Activated CD8-positive, alpha-beta memory T cell treated with anti-CD3 and anti-CD28 coated beads, Interleukin-2, amount 10 ng/mL, durations not matched to agents 7 days and 5 days (primary cell): ENCODE measurements at regions of chr1 and their contacts with region 1.

Region 1: GRCh38 chr1:44848456-44849181 is 5.6 kb upstream of the PTCH2 start:
- DNase-seq: no peak
- ATAC-seq: no peak
- H3K4me3 Mint-ChIP-seq: no peak overlapping the region
- H3K27ac Mint-ChIP-seq: no peak overlapping the region
- H3K4me1 Mint-ChIP-seq: no peaks in the 10 kb centered on the region
- H3K27me3 Mint-ChIP-seq: peaks cover 5% of the 10 kb centered on the region

Region 2: DNA sequence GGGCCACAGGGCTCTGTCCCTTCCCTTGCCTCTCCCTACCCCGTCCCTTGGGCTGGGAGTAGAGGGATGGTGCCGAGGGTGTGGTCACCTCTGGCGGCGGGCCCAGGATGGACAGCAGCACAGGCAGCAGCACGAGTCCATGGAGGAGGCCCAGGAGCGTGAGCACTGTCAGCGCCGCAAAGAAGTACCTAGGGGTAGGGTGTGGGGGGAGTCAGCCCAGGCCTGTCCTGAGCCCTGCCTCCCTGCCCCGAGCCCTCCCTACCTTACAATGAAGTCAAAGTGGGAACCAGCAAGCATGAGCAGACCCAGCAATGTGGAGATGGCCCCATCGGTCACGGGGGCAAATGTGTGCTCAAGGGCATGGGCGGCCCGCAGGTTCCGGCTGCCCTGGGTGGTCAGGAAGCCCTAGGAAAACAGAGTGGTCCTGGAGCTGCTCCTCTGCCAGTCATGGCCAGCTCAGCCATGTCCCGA is 25.6 kb before region 1 on chr1:
- CTCF ChIA-PET with region 1: no interaction called
- DNase-seq: no peak
- ATAC-seq: no peak
- H3K4me3 Mint-ChIP-seq: no peak overlapping the region
- H3K27ac Mint-ChIP-seq: no peak overlapping the region
- H3K4me1 Mint-ChIP-seq: peaks cover 32% of the 10 kb centered on the region
- H3K27me3 Mint-ChIP-seq: no peaks in the 10 kb centered on the region

Region 3: GRCh38 chr1:44835738-44836675 is 12.6 kb before region 1 on chr1:
- CTCF ChIA-PET with region 1: interaction called, 19 read pairs
- DNase-seq: peak; percentile 94
- ATAC-seq: peak; percentile 97
- H3K4me3 Mint-ChIP-seq: no peak overlapping the region
- H3K27ac Mint-ChIP-seq: peak overlapping the region; percentile 47
- H3K4me1 Mint-ChIP-seq: peaks cover 9% of the 10 kb centered on the region
- H3K27me3 Mint-ChIP-seq: no peaks in the 10 kb centered on the region

Region 4: DNA sequence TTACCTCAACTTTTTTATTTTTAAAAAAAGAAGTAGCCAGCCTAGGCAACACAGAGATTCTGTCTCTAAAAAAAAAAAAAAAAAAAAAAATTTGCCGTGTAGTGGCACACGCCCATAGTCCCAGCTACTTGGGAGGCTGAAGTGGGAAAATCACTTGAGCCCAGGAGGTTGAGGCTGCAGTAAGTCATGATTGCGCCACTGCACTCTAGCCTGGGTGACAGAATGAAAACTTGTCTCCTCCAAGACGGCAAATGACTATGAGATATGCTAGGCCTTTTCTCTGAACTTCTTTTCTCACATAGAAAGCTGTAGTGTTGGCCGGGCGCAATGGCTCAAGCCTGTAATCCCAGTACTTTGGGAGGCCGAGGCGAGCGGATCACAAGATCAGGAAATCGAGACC is 19.2 kb after region 1 on chr1:
- CTCF ChIA-PET with region 1: no interaction called
- DNase-seq: no peak
- ATAC-seq: no peak
- H3K4me3 Mint-ChIP-seq: no peak overlapping the region
- H3K27ac Mint-ChIP-seq: no peak overlapping the region
- H3K4me1 Mint-ChIP-seq: no peaks in the 10 kb centered on the region
- H3K27me3 Mint-ChIP-seq: no peaks in the 10 kb centered on the region